Mammary epithelial cell (primary cell): ENCODE measurements at regions of chr3 and their contacts with region 1.

Region 1: DNA sequence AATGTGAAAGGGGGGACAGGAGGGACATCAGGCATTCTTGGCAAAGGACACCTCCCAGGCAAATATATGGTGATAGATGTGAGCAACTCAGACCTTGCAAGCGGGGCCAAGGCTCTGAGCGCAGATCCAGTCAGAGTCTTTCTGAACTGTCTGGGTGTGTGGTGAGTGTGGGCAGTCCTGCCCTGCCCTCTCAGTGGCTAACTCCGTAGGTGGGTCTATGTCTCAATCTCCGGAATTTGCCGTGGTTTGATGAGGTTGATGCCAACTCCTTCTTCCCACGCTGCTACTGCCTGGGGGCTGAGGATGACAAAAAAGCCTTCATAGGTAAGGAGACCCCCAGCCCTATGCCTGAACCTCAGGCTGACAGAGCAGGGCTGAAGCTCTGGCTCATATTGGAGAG is 7.4 kb downstream of the TTLL3 start:
- DNase-seq: peak; percentile 74
- H3K4me3 ChIP-seq: no peak overlapping the region
- H3K27ac ChIP-seq: no peak overlapping the region
- H3K4me1 ChIP-seq: peaks cover 4% of the 10 kb centered on the region
- H3K27me3 ChIP-seq: no peaks in the 10 kb centered on the region
- CTCF ChIP-seq: no peak

Region 2: GRCh38 chr3:9852549-9852948 is 35.1 kb after region 1 on chr3:
- CTCF ChIA-PET with region 1: no interaction called
- dilution Hi-C with region 1: loop called (anchors 5 kb)
- in situ Hi-C with region 1: no loop called
- intact Hi-C with region 1: no loop called
- DNase-seq: no peak
- H3K4me3 ChIP-seq: no peak overlapping the region
- H3K27ac ChIP-seq: no peak overlapping the region
- H3K4me1 ChIP-seq: peaks cover 5% of the 10 kb centered on the region
- H3K27me3 ChIP-seq: no peaks in the 10 kb centered on the region
- CTCF ChIP-seq: peak in 1 of 2 donors; percentile 24

Region 3: GRCh38 chr3:9969632-9970019 is 152.2 kb after region 1 on chr3:
- CTCF ChIA-PET with region 1: no interaction called
- dilution Hi-C with region 1: loop called (anchors 5 kb)
- in situ Hi-C with region 1: no loop called
- intact Hi-C with region 1: no loop called
- DNase-seq: no peak
- H3K4me3 ChIP-seq: no peak overlapping the region
- H3K27ac ChIP-seq: no peak overlapping the region
- H3K4me1 ChIP-seq: peaks cover 6% of the 10 kb centered on the region
- H3K27me3 ChIP-seq: no peaks in the 10 kb centered on the region
- CTCF ChIP-seq: no peak

Region 4: DNA sequence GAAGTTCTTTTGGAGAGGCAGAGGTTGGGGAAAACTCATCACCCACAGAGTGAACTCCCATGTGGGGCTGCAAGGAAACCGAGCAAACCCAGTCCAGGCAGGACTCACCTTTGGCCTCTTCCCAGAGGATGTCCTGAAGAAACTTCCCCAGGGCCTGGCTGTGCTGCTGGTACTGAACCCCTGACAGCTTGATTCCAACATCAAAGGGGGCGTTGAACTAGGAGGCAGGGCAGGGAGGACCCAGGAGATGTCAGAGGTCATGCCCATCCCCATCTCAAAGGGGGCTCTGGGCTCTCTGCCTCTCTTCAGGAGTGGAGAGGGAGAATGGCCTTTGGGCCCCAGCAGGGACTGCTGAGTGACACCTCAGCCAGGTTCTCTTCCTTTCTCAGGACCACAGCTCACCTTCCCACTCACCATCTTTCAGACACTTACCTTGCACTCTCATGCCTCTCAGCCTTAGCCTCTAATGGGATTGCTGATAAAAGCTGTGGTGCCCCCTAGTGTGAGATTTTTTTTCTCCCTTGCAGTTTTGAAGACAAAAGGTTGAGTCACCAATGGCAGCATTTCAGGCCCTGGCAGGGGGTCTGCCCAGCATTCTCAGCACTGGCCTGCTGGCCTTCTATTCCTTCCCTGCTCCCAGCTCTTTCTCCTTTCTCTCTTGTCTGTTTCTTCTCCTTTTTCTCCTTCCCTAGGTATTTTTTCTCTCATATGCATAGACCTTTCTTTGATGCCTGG is 469.3 kb after region 1 on chr3:
- CTCF ChIA-PET with region 1: no interaction called
- dilution Hi-C with region 1: loop called (anchors 5 kb)
- in situ Hi-C with region 1: no loop called
- intact Hi-C with region 1: loop called (anchors 10 kb)
- DNase-seq: peak; percentile 39
- H3K4me3 ChIP-seq: no peak overlapping the region
- H3K27ac ChIP-seq: no peak overlapping the region
- H3K4me1 ChIP-seq: no peaks in the 10 kb centered on the region
- H3K27me3 ChIP-seq: no peaks in the 10 kb centered on the region
- CTCF ChIP-seq: no peak